ENCODE measurements at regions of chr4 and their contacts with region 1.

Region 1: DNA sequence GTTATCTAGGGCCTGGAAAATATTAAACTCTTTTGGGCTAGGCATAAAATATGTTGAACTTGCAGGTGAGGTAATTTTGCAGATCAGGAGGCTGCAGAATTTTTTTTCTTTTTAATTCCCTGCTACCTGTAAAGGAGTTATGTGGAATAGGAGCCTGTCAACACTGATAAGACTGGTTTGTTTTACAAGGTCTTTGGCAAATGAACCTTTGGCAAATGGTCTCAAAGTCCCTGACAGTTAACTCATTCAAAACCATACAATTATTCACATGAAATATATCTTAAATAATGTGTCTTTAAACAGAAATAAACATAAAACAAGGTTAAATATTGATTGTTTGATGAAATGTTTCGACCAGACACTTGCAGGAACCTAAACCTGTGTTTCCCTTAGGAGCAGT is 340.2 kb downstream of the GASK1B start:
- DNase-seq: no peak
- ATAC-seq: no peak

Region 2: DNA sequence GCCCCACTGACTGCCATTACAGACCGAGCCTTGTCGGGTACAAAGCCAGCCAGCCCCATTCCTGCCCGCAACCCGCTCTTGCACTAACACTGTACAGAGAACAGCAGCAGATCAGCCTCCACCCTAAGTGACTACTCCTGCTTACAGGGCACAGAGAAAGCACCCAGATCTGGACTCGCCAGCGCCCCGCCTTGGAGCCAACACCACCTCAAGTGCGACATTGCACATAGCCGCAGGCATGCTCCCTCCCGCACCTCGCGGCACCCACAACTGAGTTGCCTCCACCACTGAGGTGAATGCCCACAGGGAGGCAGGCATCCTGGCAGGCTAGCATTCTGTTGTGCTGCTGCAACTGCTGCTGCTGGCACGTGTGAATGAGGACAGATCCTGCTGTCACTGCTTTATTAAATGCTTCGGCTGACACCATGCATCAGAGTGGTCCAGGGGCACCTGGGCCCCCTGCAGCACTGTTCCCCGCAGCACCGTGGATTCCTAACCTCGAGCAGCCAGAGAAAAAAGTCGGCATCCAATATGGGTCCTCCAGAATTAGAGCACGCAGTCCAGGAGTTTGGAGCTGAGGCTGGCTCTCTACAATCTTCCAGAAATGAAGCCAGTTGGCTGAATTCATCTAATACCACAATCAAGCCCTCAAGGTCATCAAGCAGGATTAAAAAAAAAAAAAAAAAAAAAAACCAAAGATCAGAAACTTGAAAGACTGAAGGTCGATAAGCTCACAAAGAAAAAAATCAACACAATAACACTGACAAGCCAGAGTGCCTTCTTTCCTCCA is 12.7 kb before region 1 on chr4:
- intact Hi-C with region 1: loop called (anchors 2 kb)
- DNase-seq: no peak
- ATAC-seq: no peak

Region 3: DNA sequence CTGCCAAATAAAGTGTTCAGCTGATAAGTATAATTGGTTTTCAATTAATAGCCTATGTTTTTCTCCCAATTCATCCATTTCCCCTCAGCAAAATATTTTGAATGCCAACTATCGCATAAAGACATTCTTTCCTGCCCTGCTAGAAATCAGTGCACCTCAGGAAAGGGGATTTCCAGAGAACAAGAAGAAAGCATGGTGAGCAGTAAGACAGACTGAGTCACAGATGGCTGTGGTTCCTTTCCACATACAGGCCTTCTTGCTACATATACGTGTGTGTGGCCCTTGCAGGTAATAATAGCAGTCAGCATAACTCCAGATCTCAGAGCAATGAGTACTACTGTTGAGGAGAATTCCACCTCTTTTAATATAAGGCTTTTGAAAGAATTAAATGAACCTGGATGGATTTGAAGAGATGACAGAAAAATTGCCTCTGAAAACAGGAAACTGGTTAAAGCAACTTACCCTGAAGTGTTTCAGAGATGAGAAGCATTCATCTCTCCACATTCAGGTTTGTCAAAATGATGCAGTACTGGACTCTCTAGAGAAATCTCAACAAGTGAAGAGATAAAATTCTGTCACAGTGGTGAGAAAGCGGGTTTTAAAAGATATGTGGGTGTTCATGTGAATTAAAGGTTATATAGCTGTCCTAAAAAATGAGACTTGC is 326.6 kb after region 1 on chr4:
- intact Hi-C with region 1: no loop called
- DNase-seq: no peak
- ATAC-seq: no peak